ENCODE measurements at regions of chr11 and their contacts with region 1.

Region 1: GRCh38 chr11:62831520-62832335 is at the start of gene STX5:
- DNase-seq: peak; percentile 96 to 99
- H3K4me3 ChIP-seq: peak within 1 kb of the TSS; percentile 76 to 94 (median 92)
- H3K27ac ChIP-seq: peak within 1 kb of the TSS; percentile 95
- H3K4me1 ChIP-seq: peaks cover 0 to 17% (median 2%) of the 10 kb centered on the region in 4 experiments; a peak in 2 of 7 replicates
- H3K27me3 ChIP-seq: no peaks in the 10 kb centered on the region
- CTCF ChIP-seq: no peak
- EP300 ChIP-seq: no peak
- POLR2A ChIP-seq: peak; percentile 53 to 96; a peak in 2 of 3 replicates
- RAD21 ChIP-seq: no peak
- total RNA-seq, gene STX5: 24.2 and 25.3 TPM in 2 replicates

Region 2: GRCh38 chr11:62753736-62754603 is 77.8 kb before region 1 on chr11 and contains the start of gene ZBTB3:
- CTCF ChIA-PET with region 1: interaction called, 3 read pairs
- POLR2A ChIA-PET with region 1: interaction called, 11 read pairs
- DNase-seq: peak; percentile 97 to 99
- H3K4me3 ChIP-seq: peak within 1 kb of the TSS; percentile 74 to 89 (median 82)
- H3K27ac ChIP-seq: peak within 1 kb of the TSS; percentile 86
- H3K4me1 ChIP-seq: peaks cover 4 to 9% (median 6%) of the 10 kb centered on the region in 4 experiments
- H3K27me3 ChIP-seq: no peaks in the 10 kb centered on the region
- CTCF ChIP-seq: no peak
- EP300 ChIP-seq: no peak
- POLR2A ChIP-seq: peak; percentile 37 to 79
- RAD21 ChIP-seq: 0 out of 4 replicates have a peak, but pooled peaks of 1 of the 2 experiments have one; percentile 6
- total RNA-seq, gene ZBTB3: 76.5 and 76.9 TPM in 2 replicates

Region 3: GRCh38 chr11:62794201-62794775 is 37.4 kb before region 1 on chr11:
- CTCF ChIA-PET with region 1: interaction called, 3 read pairs
- POLR2A ChIA-PET with region 1: interaction called, 38 read pairs
- DNase-seq: no peak
- H3K4me3 ChIP-seq: no peak overlapping the region
- H3K27ac ChIP-seq: no peak overlapping the region
- H3K4me1 ChIP-seq: peaks cover 0 to 7% (median 3%) of the 10 kb centered on the region in 4 experiments; a peak in 3 of 7 replicates
- H3K27me3 ChIP-seq: no peaks in the 10 kb centered on the region
- CTCF ChIP-seq: no peak
- EP300 ChIP-seq: no peak
- POLR2A ChIP-seq: no peak
- RAD21 ChIP-seq: no peak

Region 4: GRCh38 chr11:62799486-62799885 is 32.2 kb before region 1 on chr11:
- CTCF ChIA-PET with region 1: no interaction called
- POLR2A ChIA-PET with region 1: interaction called, 34 read pairs
- DNase-seq: no peak
- H3K4me3 ChIP-seq: no peak overlapping the region
- H3K27ac ChIP-seq: no peak overlapping the region
- H3K4me1 ChIP-seq: 0 out of 7 replicates have a peak, but pooled peaks cover 0 to 2% (median 0%) of the 10 kb centered on the region in 4 experiments
- H3K27me3 ChIP-seq: no peaks in the 10 kb centered on the region
- CTCF ChIP-seq: no peak
- EP300 ChIP-seq: no peak
- POLR2A ChIP-seq: no peak
- RAD21 ChIP-seq: no peak

Region 5: GRCh38 chr11:62816557-62816956 is 15.2 kb before region 1 on chr11:
- CTCF ChIA-PET with region 1: interaction called, 9 read pairs
- POLR2A ChIA-PET with region 1: interaction called, 27 read pairs
- DNase-seq: no peak
- H3K4me3 ChIP-seq: no peak overlapping the region
- H3K27ac ChIP-seq: no peak overlapping the region
- H3K4me1 ChIP-seq: no peaks in the 10 kb centered on the region
- H3K27me3 ChIP-seq: no peaks in the 10 kb centered on the region
- CTCF ChIP-seq: no peak
- EP300 ChIP-seq: no peak
- POLR2A ChIP-seq: no peak
- RAD21 ChIP-seq: no peak

Region 6: DNA sequence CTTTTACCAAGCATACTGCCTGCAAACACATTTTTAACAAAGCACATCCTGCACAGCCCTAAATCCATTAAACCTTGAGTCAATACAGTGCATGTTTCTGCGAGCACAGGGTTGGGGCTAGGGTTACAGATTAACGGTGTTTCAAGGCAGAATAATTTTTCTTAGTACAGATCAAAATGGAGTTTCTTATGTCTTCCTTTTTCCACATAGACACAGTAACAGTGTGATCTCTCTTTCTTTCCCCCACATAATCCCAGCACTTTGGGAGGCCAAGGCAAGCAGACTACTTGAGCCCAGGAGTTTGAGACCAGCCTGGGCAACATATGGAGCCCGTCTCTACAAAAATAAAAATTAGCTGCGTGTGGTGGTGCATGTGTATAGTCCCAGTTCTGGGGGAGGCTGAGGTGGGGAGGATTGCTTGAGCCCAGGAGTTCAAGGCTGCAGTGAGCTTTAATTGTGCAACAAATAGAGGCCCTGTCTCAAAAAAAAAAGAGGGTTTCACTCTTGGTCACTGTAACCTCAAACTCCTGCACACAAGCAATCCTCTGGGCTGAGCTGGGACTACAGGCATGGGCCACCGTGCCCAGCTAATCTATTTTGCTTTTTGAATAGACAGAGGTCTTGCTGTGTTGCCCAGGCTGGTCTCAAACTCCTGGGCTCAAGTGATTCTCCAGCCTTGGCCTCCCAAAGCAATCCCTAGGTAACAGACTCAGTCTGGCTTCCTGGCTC is 29.3 kb after region 1 on chr11:
- CTCF ChIA-PET with region 1: interaction called, 6 read pairs
- POLR2A ChIA-PET with region 1: interaction called, 398 read pairs
- DNase-seq: no peak
- H3K4me3 ChIP-seq: no peak overlapping the region
- H3K27ac ChIP-seq: no peak overlapping the region
- H3K4me1 ChIP-seq: peaks cover 0 to 10% (median 6%) of the 10 kb centered on the region in 4 experiments; a peak in 4 of 7 replicates
- H3K27me3 ChIP-seq: no peaks in the 10 kb centered on the region
- CTCF ChIP-seq: no peak
- EP300 ChIP-seq: no peak
- POLR2A ChIP-seq: no peak
- RAD21 ChIP-seq: no peak

Region 7: DNA sequence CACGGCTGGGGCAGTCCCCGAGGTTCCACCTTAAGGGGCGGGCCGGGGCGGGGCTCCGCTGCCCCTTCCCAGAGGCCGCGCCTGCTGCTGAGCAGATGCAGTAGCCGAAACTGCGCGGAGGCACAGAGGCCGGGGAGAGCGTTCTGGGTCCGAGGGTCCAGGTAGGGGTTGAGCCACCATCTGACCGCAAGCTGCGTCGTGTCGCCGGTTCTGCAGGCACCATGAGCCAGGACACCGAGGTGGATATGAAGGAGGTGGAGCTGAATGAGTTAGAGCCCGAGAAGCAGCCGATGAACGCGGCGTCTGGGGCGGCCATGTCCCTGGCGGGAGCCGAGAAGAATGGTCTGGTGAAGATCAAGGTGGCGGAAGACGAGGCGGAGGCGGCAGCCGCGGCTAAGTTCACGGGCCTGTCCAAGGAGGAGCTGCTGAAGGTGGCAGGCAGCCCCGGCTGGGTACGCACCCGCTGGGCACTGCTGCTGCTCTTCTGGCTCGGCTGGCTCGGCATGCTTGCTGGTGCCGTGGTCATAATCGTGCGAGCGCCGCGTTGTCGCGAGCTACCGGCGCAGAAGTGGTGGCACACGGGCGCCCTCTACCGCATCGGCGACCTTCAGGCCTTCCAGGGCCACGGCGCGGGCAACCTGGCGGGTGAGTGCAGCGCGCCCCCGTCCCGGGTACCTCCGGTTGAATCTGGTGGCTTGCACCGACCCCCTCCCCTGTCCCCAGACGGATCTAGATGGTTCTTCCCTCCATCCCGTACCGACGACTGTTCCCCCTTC is 49.3 kb after region 1 on chr11 and contains the start of gene SLC3A2:
- CTCF ChIA-PET with region 1: interaction called, 4 read pairs
- POLR2A ChIA-PET with region 1: interaction called, 103 read pairs
- DNase-seq: peak; percentile 56 to 88
- H3K4me3 ChIP-seq: peak within 1 kb of the TSS; percentile 67 to 97 (median 88)
- H3K27ac ChIP-seq: peak within 1 kb of the TSS; percentile 98
- H3K4me1 ChIP-seq: peaks cover 0 to 30% (median 12%) of the 10 kb centered on the region in 4 experiments; a peak in 5 of 7 replicates
- H3K27me3 ChIP-seq: no peaks in the 10 kb centered on the region
- CTCF ChIP-seq: peak; percentile 60 to 82 (median 71)
- EP300 ChIP-seq: no peak
- POLR2A ChIP-seq: peak; percentile 97 to 99
- RAD21 ChIP-seq: peak; percentile 39 to 55
- total RNA-seq, gene SLC3A2: 393 and 410 TPM in 2 replicates